ENCODE measurements at regions of chr10 and their contacts with region 1.

Region 1: GRCh38 chr10:29106287-29106686 is 182.6 kb upstream of the LYZL1 start:
- H3K4me3 ChIP-seq: no peak overlapping the region
- H3K27ac ChIP-seq: no peak overlapping the region
- H3K4me1 ChIP-seq: peaks cover 11% of the 10 kb centered on the region
- CTCF ChIP-seq: no peak

Region 2: DNA sequence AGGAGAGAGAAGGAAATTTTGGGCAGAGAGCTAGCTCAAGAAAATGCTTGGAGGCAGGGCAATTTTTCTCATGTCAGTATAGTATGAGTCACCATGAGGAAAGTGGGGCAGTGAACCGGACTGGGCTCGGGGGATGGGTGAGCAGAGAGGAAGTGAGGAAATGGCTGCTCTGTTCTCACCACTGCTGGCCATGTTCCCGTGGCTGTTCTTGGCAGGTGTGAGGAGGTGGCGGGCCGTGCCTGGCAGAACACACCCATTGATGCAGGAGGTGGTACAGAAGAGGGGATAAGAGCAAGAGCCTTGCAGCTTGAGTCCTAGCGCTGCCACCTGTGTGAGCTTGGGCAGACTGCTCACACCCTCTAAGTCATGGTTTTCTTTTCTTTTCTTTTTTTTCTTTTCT is 121.9 kb before region 1 on chr10:
- CTCF ChIA-PET with region 1: no interaction called
- POLR2A ChIA-PET with region 1: no interaction called
- H3K4me3 ChIP-seq: no peak overlapping the region
- H3K27ac ChIP-seq: no peak overlapping the region
- H3K4me1 ChIP-seq: no peaks in the 10 kb centered on the region
- CTCF ChIP-seq: no peak

Region 3: DNA sequence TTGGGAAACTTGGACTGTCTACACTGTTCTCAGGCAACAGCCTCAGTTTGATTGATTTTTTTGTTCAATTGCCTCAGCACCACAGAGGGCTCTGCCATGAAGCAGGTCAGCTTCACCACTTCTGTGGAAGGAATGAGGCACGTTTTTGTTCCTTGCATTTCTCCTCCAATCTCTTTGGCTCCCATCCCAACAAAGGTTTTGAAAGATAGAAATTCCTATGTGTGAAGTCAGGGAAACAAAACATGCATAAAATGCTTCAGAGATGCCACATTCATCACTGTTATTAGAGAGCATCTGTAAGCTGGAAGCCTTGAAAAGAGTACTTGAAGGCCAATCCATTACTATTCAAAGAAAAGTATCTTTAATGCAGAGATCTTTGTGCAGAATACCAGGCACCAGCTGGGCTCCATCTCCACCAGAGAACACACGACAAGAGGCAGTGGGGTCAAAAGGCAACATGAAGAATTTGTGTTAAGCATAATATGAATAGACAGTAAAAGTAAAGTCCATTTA is 66.6 kb before region 1 on chr10:
- CTCF ChIA-PET with region 1: no interaction called
- POLR2A ChIA-PET with region 1: no interaction called
- H3K4me3 ChIP-seq: no peak overlapping the region
- H3K27ac ChIP-seq: no peak overlapping the region
- H3K4me1 ChIP-seq: no peaks in the 10 kb centered on the region
- CTCF ChIP-seq: no peak

Region 4: DNA sequence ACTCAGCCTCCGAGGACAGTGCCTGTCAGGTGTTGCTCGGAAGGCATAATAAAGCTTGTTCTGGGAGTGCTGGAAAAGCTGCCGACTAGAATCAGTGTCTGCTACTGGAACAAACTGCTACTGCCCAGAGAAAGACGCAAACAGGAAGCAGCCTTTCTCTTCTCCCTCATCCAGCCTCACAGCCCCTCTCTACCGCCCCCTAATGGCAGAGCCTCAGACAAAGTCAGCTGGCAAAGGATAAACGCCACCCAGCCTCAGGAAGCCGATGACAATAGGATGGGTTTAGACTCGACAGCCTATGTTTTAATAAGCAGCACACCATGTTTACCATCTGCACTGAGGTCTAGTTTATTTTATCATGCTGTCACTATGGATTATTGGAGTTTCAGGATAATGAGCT is 13.1 kb after region 1 on chr10:
- CTCF ChIA-PET with region 1: interaction called, 14 read pairs
- POLR2A ChIA-PET with region 1: no interaction called
- H3K4me3 ChIP-seq: no peak overlapping the region
- H3K27ac ChIP-seq: no peak overlapping the region
- H3K4me1 ChIP-seq: no peaks in the 10 kb centered on the region
- CTCF ChIP-seq: no peak

Region 5: GRCh38 chr10:29160110-29160669 is 53.9 kb after region 1 on chr10:
- CTCF ChIA-PET with region 1: no interaction called
- POLR2A ChIA-PET with region 1: no interaction called
- H3K4me3 ChIP-seq: no peak overlapping the region
- H3K27ac ChIP-seq: no peak overlapping the region
- H3K4me1 ChIP-seq: no peaks in the 10 kb centered on the region
- CTCF ChIP-seq: no peak

Measured in HEK293 (cell line).